ENCODE measurements at regions of chr20 and their contacts with region 1.

Region 1: DNA sequence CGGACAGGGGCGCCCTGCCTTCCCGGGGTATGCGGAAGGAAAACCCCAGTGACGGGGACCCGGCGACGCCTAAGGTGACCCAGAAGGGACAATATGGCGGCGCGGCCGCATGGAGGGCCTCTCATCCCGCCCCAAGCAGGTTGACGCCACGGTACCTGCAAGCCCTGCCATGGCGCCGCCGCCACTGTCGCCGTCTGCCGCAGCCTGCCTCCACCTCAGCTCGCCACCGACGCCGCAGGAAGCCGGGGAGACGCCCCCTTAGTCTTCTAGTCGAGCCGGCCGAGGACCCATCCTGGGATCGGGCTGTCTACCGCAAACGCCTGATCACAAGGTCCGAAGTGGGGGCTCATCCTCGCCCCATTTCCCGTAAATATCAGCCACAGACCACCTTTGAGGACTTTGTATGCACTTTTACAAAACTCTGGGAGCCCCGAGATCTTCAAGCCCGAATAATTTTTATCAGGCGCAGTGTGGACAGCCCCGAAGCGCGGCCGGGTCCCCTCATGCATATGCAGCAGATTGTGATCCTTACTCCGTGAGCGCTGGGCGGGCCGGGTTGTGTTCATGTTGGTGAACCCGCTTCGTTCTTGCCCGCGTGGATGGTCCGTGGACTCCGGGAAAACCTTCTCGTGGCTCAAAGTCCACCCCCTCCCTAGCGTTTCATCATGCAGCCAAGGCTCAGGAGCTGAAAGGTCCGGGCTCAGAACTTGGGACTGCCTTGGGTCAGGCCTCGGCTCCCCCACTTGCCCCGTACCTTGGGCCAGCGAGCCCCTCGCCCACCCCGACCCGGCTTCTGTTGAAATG is at the start of gene BLCAP:
- DNase-seq: peak; percentile 80 to 88 (median 85)
- H3K4me3 ChIP-seq: peak within 1 kb of the TSS; percentile 96 to 99 (median 97)
- H3K4me3 Mint-ChIP-seq: peak within 1 kb of the TSS; percentile 95
- H3K27ac ChIP-seq: peak within 1 kb of the TSS; percentile 82 to 100
- H3K27ac Mint-ChIP-seq: peak within 1 kb of the TSS; percentile 100
- H3K4me1 ChIP-seq: peaks cover 30 to 40% of the 10 kb centered on the region in 2 donors
- H3K4me1 Mint-ChIP-seq: peaks cover 57% of the 10 kb centered on the region
- H3K27me3 ChIP-seq: peaks cover 0 to 3% of the 10 kb centered on the region in 2 donors
- H3K27me3 Mint-ChIP-seq: peaks cover 6 to 7% (median 6%) of the 10 kb centered on the region in 3 donors
- CTCF ChIP-seq: no peak
- polyA plus RNA-seq, gene BLCAP: 45.3 to 54.5 (median 53.3) TPM

Region 2: GRCh38 chr20:37265152-37265551 is 262.7 kb before region 1 on chr20:
- intact Hi-C with region 1: loop called (anchors 5 to 10 kb)
- DNase-seq: peak; percentile 84 to 91 (median 90)
- H3K4me3 ChIP-seq: no peak overlapping the region
- H3K4me3 Mint-ChIP-seq: no peak overlapping the region
- H3K27ac ChIP-seq: peak overlapping the region; percentile 53 to 81
- H3K27ac Mint-ChIP-seq: peak overlapping the region; percentile 37 to 89 (median 78)
- H3K4me1 ChIP-seq: peaks cover 16% of the 10 kb centered on the region in 2 donors
- H3K4me1 Mint-ChIP-seq: peaks cover 17% of the 10 kb centered on the region
- H3K27me3 ChIP-seq: no peaks in the 10 kb centered on the region
- H3K27me3 Mint-ChIP-seq: peaks cover 1 to 3% (median 2%) of the 10 kb centered on the region in 3 donors
- CTCF ChIP-seq: no peak

Region 3: GRCh38 chr20:37406010-37406998 is 121.5 kb before region 1 on chr20:
- intact Hi-C with region 1: loop called in 1 of 2 experiments (anchors 10 kb)
- DNase-seq: peak; percentile 23 to 55 (median 45)
- H3K4me3 ChIP-seq: peak overlapping the region; percentile 11 to 70 (median 22)
- H3K4me3 Mint-ChIP-seq: peak overlapping the region; percentile 60 to 86
- H3K27ac ChIP-seq: no peak overlapping the region
- H3K27ac Mint-ChIP-seq: peak overlapping the region in 3 of 7 donors; percentile 20 to 44 (median 31)
- H3K4me1 ChIP-seq: peaks cover 17 to 25% of the 10 kb centered on the region in 2 donors
- H3K4me1 Mint-ChIP-seq: peaks cover 19% of the 10 kb centered on the region
- H3K27me3 ChIP-seq: peaks cover 0 to 7% of the 10 kb centered on the region in 2 donors
- H3K27me3 Mint-ChIP-seq: peaks cover 13 to 32% (median 28%) of the 10 kb centered on the region in 3 donors
- CTCF ChIP-seq: no peak

Measured in CD14-positive monocyte (primary cell).